ENCODE measurements at regions of chr3 and their contacts with region 1.

Region 1: GRCh38 chr3:35665390-35666055 is 26.2 kb downstream of the ARPP21 start:
- DNase-seq: no peak
- ATAC-seq: no peak
- H3K4me3 ChIP-seq: no peak overlapping the region
- H3K27ac ChIP-seq: no peak overlapping the region
- H3K4me1 ChIP-seq: peaks cover 0 to 23% (median 9%) of the 10 kb centered on the region in 9 donors
- H3K27me3 ChIP-seq: no peaks in the 10 kb centered on the region
- CTCF ChIP-seq: no peak

Region 2: GRCh38 chr3:35908366-35909232 is 243.1 kb after region 1 on chr3:
- intact Hi-C with region 1: loop called in 1 of 10 experiments (anchors 5 kb)
- DNase-seq: peak; percentile 15 to 52
- ATAC-seq: peak in 3 of 8 donors; percentile 39 to 74 (median 44)
- H3K4me3 ChIP-seq: no peak overlapping the region
- H3K27ac ChIP-seq: no peak overlapping the region
- H3K4me1 ChIP-seq: no peaks in the 10 kb centered on the region
- H3K27me3 ChIP-seq: peaks cover 0 to 7% (median 0%) of the 10 kb centered on the region in 7 donors
- CTCF ChIP-seq: peak; percentile 56 to 83 (median 75)